HepG2 (cell line): ENCODE measurements at regions of chr16 and their contacts with region 1.

Region 1: DNA sequence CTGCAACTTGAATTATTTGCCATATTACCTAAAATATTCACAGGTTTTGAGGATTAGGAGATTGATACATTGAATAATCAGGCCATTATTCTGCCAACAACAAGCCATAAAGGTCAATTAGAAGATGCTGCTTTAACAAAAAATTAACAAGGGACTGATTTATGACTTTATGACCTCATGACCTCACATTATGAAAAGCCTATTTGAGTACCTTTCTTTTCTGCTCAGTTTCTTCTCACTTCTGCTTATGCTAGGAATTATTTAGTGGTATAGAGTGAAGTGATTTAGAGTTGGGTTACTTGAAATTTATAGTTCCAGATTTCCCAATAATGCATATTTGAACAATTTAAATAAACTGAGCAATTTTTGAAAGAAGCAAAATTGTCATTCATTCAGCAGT is 121.6 kb downstream of the CHD9 start:
- DNase-seq: no peak
- ATAC-seq: no peak
- H3K4me3 ChIP-seq: no peak overlapping the region
- H3K27ac ChIP-seq: no peak overlapping the region
- H3K4me1 ChIP-seq: no peaks in the 10 kb centered on the region
- H3K27me3 ChIP-seq: no peaks in the 10 kb centered on the region
- CTCF ChIP-seq: no peak
- EP300 ChIP-seq: no peak
- POLR2A ChIP-seq: no peak
- RAD21 ChIP-seq: no peak

Region 2: DNA sequence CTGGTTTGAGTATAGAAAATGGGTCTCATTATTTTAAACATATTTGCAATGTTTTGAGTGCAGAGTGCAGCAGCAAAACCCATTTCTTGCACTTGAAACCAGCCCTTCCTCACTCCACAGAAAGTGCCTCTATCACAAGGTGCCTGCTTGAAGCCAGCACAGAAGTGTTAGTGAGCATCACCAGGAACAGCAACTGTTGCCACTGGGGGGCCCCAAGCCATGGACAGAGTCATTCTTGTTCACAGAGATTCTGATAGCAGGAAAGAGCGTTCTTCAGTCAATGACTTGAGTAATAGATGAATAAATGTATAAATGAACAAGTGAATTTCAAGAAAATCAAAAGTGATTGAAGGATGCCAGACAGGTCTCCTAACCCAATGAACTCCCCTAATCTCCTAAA is 169.3 kb before region 1 on chr16:
- CTCF ChIA-PET with region 1: no interaction called
- POLR2A ChIA-PET with region 1: no interaction called
- in situ Hi-C with region 1: no loop called
- intact Hi-C with region 1: no loop called
- DNase-seq: no peak
- ATAC-seq: peak; percentile 61
- H3K4me3 ChIP-seq: no peak overlapping the region
- H3K27ac ChIP-seq: no peak overlapping the region
- H3K4me1 ChIP-seq: no peaks in the 10 kb centered on the region
- H3K27me3 ChIP-seq: no peaks in the 10 kb centered on the region
- CTCF ChIP-seq: peak; percentile 30; the same call in 1 of the 2 replicates
- EP300 ChIP-seq: no peak
- POLR2A ChIP-seq: no peak
- RAD21 ChIP-seq: no peak

Region 3: GRCh38 chr16:53154513-53154912 is 21.9 kb before region 1 on chr16:
- CTCF ChIA-PET with region 1: no interaction called
- POLR2A ChIA-PET with region 1: no interaction called
- in situ Hi-C with region 1: no loop called
- intact Hi-C with region 1: no loop called
- DNase-seq: no peak
- ATAC-seq: no peak
- H3K4me3 ChIP-seq: no peak overlapping the region
- H3K27ac ChIP-seq: no peak overlapping the region
- H3K4me1 ChIP-seq: peaks cover 2% of the 10 kb centered on the region
- H3K27me3 ChIP-seq: no peaks in the 10 kb centered on the region
- CTCF ChIP-seq: no peak
- EP300 ChIP-seq: no peak
- POLR2A ChIP-seq: no peak
- RAD21 ChIP-seq: no peak

Region 4: GRCh38 chr16:53166099-53166498 is 10.3 kb before region 1 on chr16:
- CTCF ChIA-PET with region 1: no interaction called
- POLR2A ChIA-PET with region 1: no interaction called
- in situ Hi-C with region 1: no loop called
- intact Hi-C with region 1: loop called (anchors 1 kb)
- DNase-seq: no peak
- ATAC-seq: peak; percentile 71
- H3K4me3 ChIP-seq: no peak overlapping the region
- H3K27ac ChIP-seq: peak overlapping the region; percentile 8
- H3K4me1 ChIP-seq: peaks cover 9% of the 10 kb centered on the region; the same call in 1 of the 2 replicates
- H3K27me3 ChIP-seq: no peaks in the 10 kb centered on the region
- CTCF ChIP-seq: no peak
- EP300 ChIP-seq: no peak
- POLR2A ChIP-seq: no peak
- RAD21 ChIP-seq: no peak

Region 5: GRCh38 chr16:53232826-53233529 is 56.5 kb after region 1 on chr16:
- CTCF ChIA-PET with region 1: no interaction called
- POLR2A ChIA-PET with region 1: no interaction called
- in situ Hi-C with region 1: no loop called
- intact Hi-C with region 1: no loop called
- DNase-seq: no peak
- ATAC-seq: no peak
- H3K4me3 ChIP-seq: no peak overlapping the region
- H3K27ac ChIP-seq: no peak overlapping the region
- H3K4me1 ChIP-seq: no peaks in the 10 kb centered on the region
- H3K27me3 ChIP-seq: no peaks in the 10 kb centered on the region
- CTCF ChIP-seq: no peak
- EP300 ChIP-seq: no peak
- POLR2A ChIP-seq: no peak
- RAD21 ChIP-seq: no peak